A549 (cell line): ENCODE measurements at regions of chr19 and their contacts with region 1.

Region 1: DNA sequence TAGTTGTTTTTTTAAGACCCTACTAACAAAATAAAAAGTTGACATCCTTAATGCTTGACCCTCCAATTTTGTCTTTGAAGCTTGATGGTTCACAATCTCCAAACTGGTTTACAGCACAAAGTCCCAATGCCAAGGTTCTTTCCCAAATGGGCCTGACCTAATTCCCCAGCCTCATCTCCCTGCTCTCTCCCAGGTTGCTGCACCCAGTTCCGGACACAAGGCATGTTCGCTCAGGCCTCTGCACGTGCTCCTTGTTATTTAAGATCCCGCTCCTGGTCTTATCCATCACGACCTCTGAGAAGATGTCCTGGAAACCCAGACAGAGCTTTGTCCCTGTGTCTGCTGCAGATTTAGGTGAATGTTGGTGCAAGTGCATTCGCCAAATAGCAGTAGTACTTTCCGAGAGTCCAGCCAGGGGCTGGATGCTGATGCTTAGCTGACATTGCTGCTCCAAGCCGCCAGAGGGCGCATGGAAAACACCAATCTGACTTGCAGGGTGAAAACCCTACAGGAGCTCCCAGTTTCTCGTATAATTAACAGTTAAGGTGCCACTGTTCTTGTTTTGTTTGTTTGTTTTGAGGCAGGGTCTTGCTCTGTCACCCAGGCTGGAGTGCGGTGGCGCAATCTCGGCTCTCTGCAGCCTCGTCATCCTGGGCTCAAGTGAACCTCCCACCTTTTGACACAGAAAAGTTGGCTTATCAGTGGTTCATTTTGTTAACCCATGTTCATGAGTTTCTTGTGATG is 18.5 kb downstream of the LYPD3 start:
- DNase-seq: peak; percentile 80 to 86
- ATAC-seq: peak; percentile 95 to 96
- H3K4me3 ChIP-seq: no peak overlapping the region
- H3K27ac ChIP-seq: no peak overlapping the region
- H3K4me1 ChIP-seq: no peaks in the 10 kb centered on the region
- CTCF ChIP-seq: peak; percentile 98
- EP300 ChIP-seq: no peak
- POLR2A ChIP-seq: no peak
- RAD21 ChIP-seq: peak; percentile 95 to 96

Region 2: GRCh38 chr19:43395561-43395960 is 51.4 kb before region 1 on chr19:
- CTCF ChIA-PET with region 1: interaction called, 10 read pairs
- POLR2A ChIA-PET with region 1: no interaction called
- DNase-seq: no peak
- ATAC-seq: peak in 1 of 2 experiments; percentile 30; a peak in 3 of 6 replicates
- H3K4me3 ChIP-seq: no peak overlapping the region
- H3K27ac ChIP-seq: no peak overlapping the region
- H3K4me1 ChIP-seq: no peaks in the 10 kb centered on the region
- CTCF ChIP-seq: no peak
- EP300 ChIP-seq: no peak
- POLR2A ChIP-seq: no peak
- RAD21 ChIP-seq: no peak

Region 3: DNA sequence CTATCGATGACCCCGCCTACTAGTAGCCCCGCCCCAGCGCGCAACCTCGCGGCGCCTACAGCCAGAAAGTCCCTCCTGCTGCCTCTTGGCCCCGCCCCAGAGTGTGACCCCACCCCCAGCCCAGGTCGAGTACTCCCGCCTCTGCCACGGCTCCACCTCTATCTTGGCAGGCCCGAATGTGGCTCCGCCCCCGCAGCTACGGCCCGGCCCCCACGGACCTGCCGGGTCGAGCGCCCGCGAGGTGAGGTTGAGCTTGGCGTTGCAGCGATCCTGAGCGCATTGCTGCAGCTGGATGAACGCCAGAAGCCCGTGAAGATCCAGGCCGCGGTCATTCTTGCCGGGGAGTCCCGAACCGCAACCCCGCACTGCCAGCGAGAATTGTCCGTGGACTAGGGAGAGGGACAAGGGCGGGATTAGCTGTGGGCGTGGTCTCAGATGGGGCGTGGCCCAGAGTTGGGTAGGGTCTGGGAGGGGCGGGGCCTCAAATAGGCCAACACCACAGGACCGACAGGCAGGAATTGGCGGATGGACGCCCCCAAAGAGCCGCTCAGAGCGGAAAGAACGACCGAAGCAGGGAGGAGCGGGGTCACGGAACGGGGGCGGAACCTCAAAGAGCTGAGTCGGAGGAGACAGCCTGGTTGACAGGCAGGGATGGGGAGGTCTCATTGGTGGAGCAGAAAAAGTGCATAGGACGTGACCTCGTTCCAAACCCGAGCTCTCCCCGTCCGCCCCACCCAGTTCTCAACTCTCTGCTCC is 16.6 kb after region 1 on chr19:
- CTCF ChIA-PET with region 1: interaction called, 176 read pairs
- POLR2A ChIA-PET with region 1: interaction called, 3 read pairs
- DNase-seq: peak; percentile 97 to 98
- ATAC-seq: peak; percentile 84 to 91
- H3K4me3 ChIP-seq: peak overlapping the region; percentile 62
- H3K27ac ChIP-seq: peak overlapping the region; percentile 52 to 79; a peak in 5 of 6 replicates
- H3K4me1 ChIP-seq: peaks cover 15% of the 10 kb centered on the region
- CTCF ChIP-seq: no peak
- EP300 ChIP-seq: no peak
- POLR2A ChIP-seq: no peak; the same call in 1 of the 2 replicates
- RAD21 ChIP-seq: no peak

Region 4: DNA sequence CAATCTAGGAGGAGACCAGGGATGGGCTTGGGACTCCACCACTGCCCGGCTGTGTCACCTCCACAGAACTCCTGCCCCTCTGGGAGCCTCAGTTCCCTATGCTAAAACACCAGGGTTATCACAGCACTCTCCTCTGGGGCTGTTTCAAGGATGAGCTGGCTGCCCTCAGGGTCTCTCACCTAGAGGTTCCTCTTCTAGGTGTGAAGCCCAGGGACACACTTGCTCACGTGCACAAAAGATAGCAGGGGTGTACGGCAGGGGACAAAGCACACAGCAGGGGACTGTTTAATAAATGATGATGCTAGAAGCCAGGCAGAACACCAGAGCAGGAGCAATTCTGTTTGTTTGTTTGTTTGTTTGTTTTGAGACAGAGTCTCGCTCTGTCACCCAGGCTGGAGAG is 35.3 kb after region 1 on chr19:
- CTCF ChIA-PET with region 1: interaction called, 19 read pairs
- POLR2A ChIA-PET with region 1: no interaction called
- DNase-seq: no peak
- ATAC-seq: no peak; a peak in 2 of 6 replicates
- H3K4me3 ChIP-seq: no peak overlapping the region
- H3K27ac ChIP-seq: no peak overlapping the region
- H3K4me1 ChIP-seq: no peaks in the 10 kb centered on the region
- CTCF ChIP-seq: no peak
- EP300 ChIP-seq: no peak
- POLR2A ChIP-seq: no peak
- RAD21 ChIP-seq: no peak

Region 5: DNA sequence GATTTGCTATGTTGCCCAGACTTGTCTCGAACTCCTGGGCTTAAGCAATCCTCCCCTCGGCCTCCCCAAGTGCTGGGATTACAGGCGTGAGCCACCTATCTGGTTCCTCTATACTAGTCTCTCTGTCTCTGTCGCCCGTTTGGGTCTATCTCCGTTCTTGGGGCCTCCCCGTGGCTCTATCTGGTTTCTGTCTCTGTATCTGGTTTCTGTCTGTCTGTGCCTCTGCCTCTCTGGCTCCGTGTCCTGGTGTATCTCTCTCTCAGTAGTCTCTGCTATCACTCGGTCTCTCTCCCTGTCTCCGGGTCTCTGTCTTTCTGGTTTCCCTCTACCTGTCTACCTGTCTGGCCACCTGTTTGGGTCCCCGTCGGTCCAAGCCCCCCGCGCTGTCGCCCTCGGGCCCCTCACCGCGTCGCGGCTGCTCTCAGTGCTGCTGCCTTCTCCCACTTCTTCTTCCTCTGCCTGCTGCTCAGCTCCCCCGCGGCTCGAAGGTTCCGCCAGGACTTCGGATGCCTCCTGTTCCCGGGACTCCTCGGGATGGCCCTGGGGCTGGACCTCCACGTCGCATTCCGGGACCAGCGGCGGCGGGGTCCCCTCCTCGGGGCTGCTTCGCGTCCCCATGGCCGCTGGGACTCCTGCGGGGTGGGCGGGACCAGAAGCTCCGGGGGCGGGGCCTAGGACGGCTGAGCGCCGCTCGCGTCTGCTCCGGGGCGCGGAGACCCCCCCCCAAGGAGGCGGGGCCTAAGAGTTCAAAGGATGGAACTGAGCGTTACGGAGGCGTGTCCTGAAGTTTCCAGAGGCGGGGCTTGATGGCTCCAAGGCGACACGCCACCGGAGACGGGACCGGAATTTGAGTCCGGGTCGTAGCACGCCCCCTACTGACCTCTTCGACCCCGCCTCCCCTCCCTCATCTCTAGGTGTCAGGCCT is 56.8 kb after region 1 on chr19:
- CTCF ChIA-PET with region 1: interaction called, 89 read pairs
- POLR2A ChIA-PET with region 1: interaction called, 5 read pairs
- DNase-seq: peak; percentile 94 to 95
- ATAC-seq: peak; percentile 81 to 93
- H3K4me3 ChIP-seq: peak overlapping the region; percentile 68
- H3K27ac ChIP-seq: peak overlapping the region; percentile 76 to 93
- H3K4me1 ChIP-seq: peaks cover 9% of the 10 kb centered on the region; the same call in 2 of the 3 replicates
- CTCF ChIP-seq: peak; percentile 56; the same call in 2 of the 3 replicates
- EP300 ChIP-seq: no peak
- POLR2A ChIP-seq: no peak; the same call in none of the 2 replicates
- RAD21 ChIP-seq: peak; percentile 9 to 46; a peak in 2 of 5 replicates

Region 6: GRCh38 chr19:43526884-43527859 is 80.3 kb after region 1 on chr19 and contains the start of gene ETHE1:
- CTCF ChIA-PET with region 1: interaction called, 462 read pairs
- POLR2A ChIA-PET with region 1: no interaction called
- DNase-seq: peak; percentile 62 to 89
- ATAC-seq: peak; percentile 80 to 89
- H3K4me3 ChIP-seq: peak within 1 kb of the TSS; percentile 90
- H3K27ac ChIP-seq: peak within 1 kb of the TSS; percentile 79 to 90
- H3K4me1 ChIP-seq: peaks cover 35% of the 10 kb centered on the region
- CTCF ChIP-seq: no peak
- EP300 ChIP-seq: no peak
- POLR2A ChIP-seq: peak; percentile 96
- RAD21 ChIP-seq: no peak
- polyA plus RNA-seq, gene ETHE1: 58.9 and 75.6 TPM in 2 replicates

Region 7: DNA sequence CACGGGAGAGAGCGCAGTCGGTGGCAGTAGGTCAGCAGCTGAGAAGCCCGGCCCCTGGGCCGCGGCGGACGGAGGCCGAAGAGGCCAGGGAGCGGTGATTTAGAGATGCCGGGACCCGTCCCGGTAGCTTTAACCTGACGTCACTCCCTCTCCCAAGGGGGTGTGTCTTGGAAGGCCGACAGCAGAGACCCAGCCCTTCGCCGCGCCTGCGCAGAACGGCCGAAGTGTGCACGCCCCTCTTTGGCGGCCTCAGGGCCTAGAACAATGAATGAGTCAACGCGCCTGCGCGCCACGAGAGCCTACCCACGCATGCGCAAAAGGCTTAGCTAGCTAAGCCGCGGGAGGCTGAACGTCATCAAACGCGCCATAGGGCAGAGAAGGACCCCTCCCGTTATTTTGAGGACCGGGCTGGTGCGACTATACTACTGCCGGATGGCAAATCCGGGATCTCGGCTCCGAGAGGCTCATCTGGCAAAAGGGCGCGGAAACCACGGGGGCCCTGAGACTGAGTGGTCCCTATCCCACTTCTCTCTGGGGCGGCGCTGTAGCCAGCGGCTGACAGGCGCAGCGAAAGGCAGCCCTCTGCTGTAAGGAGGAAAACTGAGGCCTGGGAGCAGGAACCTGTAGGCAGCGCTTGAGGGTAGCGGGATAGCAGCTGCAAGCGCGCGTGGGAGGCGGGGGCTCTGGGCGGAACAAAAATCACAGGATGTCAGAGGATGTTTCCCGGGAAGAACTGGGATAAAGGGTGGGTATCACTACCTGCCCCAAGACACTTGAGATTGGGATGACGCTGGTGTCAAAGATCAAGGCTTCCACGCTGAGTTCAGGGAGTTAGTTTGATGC is 149.3 kb after region 1 on chr19 and contains the starts of genes IRGQ and ZNF576:
- CTCF ChIA-PET with region 1: interaction called, 14 read pairs
- POLR2A ChIA-PET with region 1: no interaction called
- DNase-seq: peak; percentile 99 to 100
- ATAC-seq: peak; percentile 88 to 89
- H3K4me3 ChIP-seq: peak within 1 kb of the TSS; percentile 66
- H3K27ac ChIP-seq: peak within 1 kb of the TSS; percentile 86 to 88
- H3K4me1 ChIP-seq: peaks cover 19% of the 10 kb centered on the region
- CTCF ChIP-seq: no peak
- EP300 ChIP-seq: no peak
- POLR2A ChIP-seq: peak; percentile 78
- RAD21 ChIP-seq: peak; percentile 13 to 36; a peak in 4 of 5 replicates
- polyA plus RNA-seq, gene IRGQ: 10.0 and 14.2 TPM in 2 replicates
- polyA plus RNA-seq, gene ZNF576: 10.6 and 11.2 TPM in 2 replicates